T-cell (primary cell): ENCODE measurements at regions of chr2 and their contacts with region 1.

Region 1: GRCh38 chr2:217785544-217786045 is 217.2 kb downstream of the TNS1 start:
- DNase-seq: peak; percentile 23 to 81 (median 62)
- ATAC-seq: peak; percentile 57 to 64 (median 58)
- H3K4me3 ChIP-seq: no peak overlapping the region
- H3K4me3 Mint-ChIP-seq: no peak overlapping the region
- H3K27ac ChIP-seq: no peak overlapping the region
- H3K27ac Mint-ChIP-seq: peak overlapping the region in 1 of 2 donors; percentile 24
- H3K4me1 ChIP-seq: peaks cover 0 to 27% of the 10 kb centered on the region in 2 experiments
- H3K4me1 Mint-ChIP-seq: peaks cover 27 to 40% (median 36%) of the 10 kb centered on the region in 3 donors
- H3K27me3 ChIP-seq: peaks cover 0 to 19% of the 10 kb centered on the region in 2 experiments
- H3K27me3 Mint-ChIP-seq: no peaks in the 10 kb centered on the region

Region 2: GRCh38 chr2:217774232-217774631 is 11.4 kb before region 1 on chr2:
- CTCF ChIA-PET with region 1: interaction called, 6 to 9 read pairs
- POLR2A ChIA-PET with region 1: interaction called in 1 of 2 experiments, 13 read pairs
- DNase-seq: no peak
- ATAC-seq: no peak
- H3K4me3 ChIP-seq: no peak overlapping the region
- H3K4me3 Mint-ChIP-seq: no peak overlapping the region
- H3K27ac ChIP-seq: no peak overlapping the region
- H3K27ac Mint-ChIP-seq: no peak overlapping the region
- H3K4me1 ChIP-seq: peaks cover 0 to 1% of the 10 kb centered on the region in 2 experiments
- H3K4me1 Mint-ChIP-seq: peaks cover 3 to 5% (median 4%) of the 10 kb centered on the region in 3 donors
- H3K27me3 ChIP-seq: no peaks in the 10 kb centered on the region
- H3K27me3 Mint-ChIP-seq: peaks cover 4 to 9% of the 10 kb centered on the region in 2 donors

Region 3: DNA sequence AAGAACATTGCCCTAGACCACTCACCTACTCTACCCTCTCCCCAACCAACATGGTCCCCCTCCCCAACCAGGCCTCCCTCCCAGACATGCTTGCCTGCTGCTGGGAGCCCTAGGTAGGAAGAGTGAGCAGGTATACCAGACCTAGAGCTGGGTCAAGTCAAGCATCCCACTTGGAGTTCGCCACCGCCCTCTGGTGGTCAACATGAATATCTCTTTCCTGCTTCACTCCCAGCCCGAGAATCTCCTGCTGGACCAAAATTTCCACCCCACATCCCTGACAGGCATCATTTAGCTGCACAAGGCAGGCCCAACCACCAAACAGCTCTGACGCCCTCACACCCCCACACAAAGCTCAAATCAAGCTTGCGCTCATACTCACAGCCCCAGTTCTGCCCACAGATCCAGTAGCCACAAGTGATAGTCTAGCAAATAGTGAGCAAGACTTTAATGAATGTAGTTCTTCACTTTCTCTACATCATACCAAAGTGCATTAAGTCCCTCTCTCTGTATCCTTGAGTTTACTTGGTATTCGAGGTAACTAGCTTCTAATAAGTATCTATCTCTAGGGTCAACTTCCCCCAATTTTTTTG is 101.2 kb after region 1 on chr2:
- CTCF ChIA-PET with region 1: interaction called, 12 to 14 read pairs
- POLR2A ChIA-PET with region 1: no interaction called
- DNase-seq: peak in 34 of 35 experiments; percentile 8 to 71 (median 44)
- ATAC-seq: peak in 3 of 4 experiments; percentile 38 to 67 (median 58)
- H3K4me3 ChIP-seq: no peak overlapping the region
- H3K4me3 Mint-ChIP-seq: no peak overlapping the region
- H3K27ac ChIP-seq: no peak overlapping the region
- H3K27ac Mint-ChIP-seq: no peak overlapping the region
- H3K4me1 ChIP-seq: peaks cover 0 to 3% of the 10 kb centered on the region in 2 experiments
- H3K4me1 Mint-ChIP-seq: peaks cover 0 to 3% (median 2%) of the 10 kb centered on the region in 3 donors
- H3K27me3 ChIP-seq: peaks cover 0 to 19% of the 10 kb centered on the region in 2 experiments
- H3K27me3 Mint-ChIP-seq: peaks cover 5 to 12% of the 10 kb centered on the region in 2 donors

Region 4: GRCh38 chr2:218074031-218074430 is 288.4 kb after region 1 on chr2:
- CTCF ChIA-PET with region 1: interaction called in 1 of 2 experiments, 11 read pairs
- POLR2A ChIA-PET with region 1: no interaction called
- DNase-seq: peak in 10 of 35 experiments; percentile 4 to 25 (median 14)
- ATAC-seq: no peak
- H3K4me3 ChIP-seq: no peak overlapping the region
- H3K4me3 Mint-ChIP-seq: no peak overlapping the region
- H3K27ac ChIP-seq: no peak overlapping the region
- H3K27ac Mint-ChIP-seq: no peak overlapping the region
- H3K4me1 ChIP-seq: peaks cover 0 to 5% of the 10 kb centered on the region in 2 experiments
- H3K4me1 Mint-ChIP-seq: peaks cover 3 to 4% (median 4%) of the 10 kb centered on the region in 3 donors
- H3K27me3 ChIP-seq: peaks cover 0 to 19% of the 10 kb centered on the region in 2 experiments
- H3K27me3 Mint-ChIP-seq: peaks cover 1 to 3% of the 10 kb centered on the region in 2 donors